Transverse colon (tissue), 4 donors: ENCODE measurements at regions of chrX and their contacts with region 1.

Region 1: DNA sequence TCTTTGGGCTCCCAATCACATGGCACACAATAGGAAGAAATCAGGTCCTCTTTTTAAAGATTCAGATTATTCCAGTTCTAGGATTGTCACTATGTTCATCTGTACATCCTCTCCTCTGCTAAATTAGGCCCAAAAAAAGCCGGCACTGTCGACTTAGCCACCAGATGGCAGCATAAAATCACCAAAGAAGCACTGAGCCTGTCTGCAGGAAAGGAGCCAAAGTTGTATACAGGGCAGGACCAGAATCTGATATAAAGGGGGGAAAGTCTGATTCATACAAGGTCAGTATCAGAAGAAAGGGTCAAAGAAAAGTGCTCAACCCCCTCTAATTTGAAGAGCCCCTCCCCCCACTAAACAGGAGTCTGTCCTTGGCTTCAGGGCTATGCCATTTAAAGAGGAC is 292.5 kb downstream of the CHIC1 start:
- DNase-seq: peak; percentile 74
- H3K4me3 ChIP-seq: no peak overlapping the region
- H3K27ac ChIP-seq: no peak overlapping the region
- H3K4me1 ChIP-seq: no peaks in the 10 kb centered on the region
- H3K27me3 ChIP-seq: no peaks in the 10 kb centered on the region
- CTCF ChIP-seq: peak; percentile 55 to 78 (median 56)
- EP300 ChIP-seq: no peak
- POLR2A ChIP-seq: no peak

Region 2: GRCh38 chrX:73903941-73904340 is 48.4 kb after region 1 on chrX:
- in situ Hi-C with region 1: no loop called
- intact Hi-C with region 1: no loop called
- DNase-seq: no peak
- H3K4me3 ChIP-seq: no peak overlapping the region
- H3K27ac ChIP-seq: no peak overlapping the region
- H3K4me1 ChIP-seq: no peaks in the 10 kb centered on the region
- H3K27me3 ChIP-seq: no peaks in the 10 kb centered on the region
- CTCF ChIP-seq: no peak
- EP300 ChIP-seq: no peak
- POLR2A ChIP-seq: no peak

Region 3: DNA sequence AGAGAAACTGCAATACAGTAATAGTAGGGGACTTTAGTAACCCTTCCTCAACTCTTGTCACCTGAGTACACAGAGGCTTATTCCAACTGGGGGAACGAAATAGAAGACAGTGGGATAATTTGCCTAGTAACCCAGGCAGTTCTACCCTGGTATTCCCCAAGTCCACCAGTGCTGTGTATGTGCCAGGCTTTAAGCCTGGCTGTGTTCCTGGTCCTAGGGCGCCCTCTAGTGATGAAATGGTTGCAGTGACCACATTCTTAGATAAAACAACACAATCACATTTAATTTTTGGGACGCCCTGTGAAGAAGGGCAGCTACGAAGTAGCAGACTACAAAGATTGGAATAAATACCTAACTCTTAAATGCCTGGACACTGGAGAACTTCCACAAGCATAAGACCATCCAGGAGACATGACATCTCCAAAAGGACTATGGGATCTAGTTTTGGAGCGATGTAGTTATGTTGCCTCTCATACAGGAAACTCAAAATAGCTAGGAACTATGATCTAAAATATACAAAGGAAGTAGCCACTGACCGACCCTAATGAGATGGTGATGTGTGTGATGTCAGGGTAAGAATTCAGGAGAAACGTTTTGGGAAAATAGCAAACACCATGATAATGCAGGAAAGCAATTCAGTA is 160.0 kb after region 1 on chrX:
- in situ Hi-C with region 1: loop called (anchors 5 to 10 kb)
- intact Hi-C with region 1: loop called (anchors 2 kb)
- DNase-seq: peak; percentile 63
- H3K4me3 ChIP-seq: no peak overlapping the region
- H3K27ac ChIP-seq: no peak overlapping the region
- H3K4me1 ChIP-seq: no peaks in the 10 kb centered on the region
- H3K27me3 ChIP-seq: no peaks in the 10 kb centered on the region
- CTCF ChIP-seq: peak; percentile 48 to 86 (median 61)
- EP300 ChIP-seq: no peak
- POLR2A ChIP-seq: no peak

Region 4: GRCh38 chrX:74133156-74133796 is 277.7 kb after region 1 on chrX:
- in situ Hi-C with region 1: loop called (anchors 10 to 25 kb)
- intact Hi-C with region 1: loop called (anchors 5 kb)
- DNase-seq: no peak
- H3K4me3 ChIP-seq: no peak overlapping the region
- H3K27ac ChIP-seq: no peak overlapping the region
- H3K4me1 ChIP-seq: no peaks in the 10 kb centered on the region
- H3K27me3 ChIP-seq: no peaks in the 10 kb centered on the region
- CTCF ChIP-seq: peak; percentile 50 to 76 (median 52)
- EP300 ChIP-seq: no peak
- POLR2A ChIP-seq: no peak

Region 5: GRCh38 chrX:74343343-74344279 is 488.1 kb after region 1 on chrX:
- in situ Hi-C with region 1: loop called (anchors 5 to 25 kb)
- intact Hi-C with region 1: loop called (anchors 10 kb)
- DNase-seq: peak; percentile 63
- H3K4me3 ChIP-seq: no peak overlapping the region
- H3K27ac ChIP-seq: peak overlapping the region in 1 of 4 donors; percentile 16
- H3K4me1 ChIP-seq: peaks cover 0 to 4% (median 2%) of the 10 kb centered on the region in 4 donors
- H3K27me3 ChIP-seq: no peaks in the 10 kb centered on the region
- CTCF ChIP-seq: peak; percentile 47 to 70 (median 51)
- EP300 ChIP-seq: no peak
- POLR2A ChIP-seq: no peak

Region 6: GRCh38 chrX:74536152-74536831 is 680.7 kb after region 1 on chrX:
- in situ Hi-C with region 1: loop called in 1 of 4 experiments (anchors 25 kb)
- intact Hi-C with region 1: no loop called
- DNase-seq: peak; percentile 78
- H3K4me3 ChIP-seq: peak overlapping the region; percentile 28 to 51 (median 38)
- H3K27ac ChIP-seq: peak overlapping the region; percentile 81 to 92 (median 88)
- H3K4me1 ChIP-seq: peaks cover 0 to 9% (median 0%) of the 10 kb centered on the region in 4 donors
- H3K27me3 ChIP-seq: no peaks in the 10 kb centered on the region
- CTCF ChIP-seq: peak; percentile 34 to 73 (median 45)
- EP300 ChIP-seq: no peak
- POLR2A ChIP-seq: peak; percentile 16

Region 7: DNA sequence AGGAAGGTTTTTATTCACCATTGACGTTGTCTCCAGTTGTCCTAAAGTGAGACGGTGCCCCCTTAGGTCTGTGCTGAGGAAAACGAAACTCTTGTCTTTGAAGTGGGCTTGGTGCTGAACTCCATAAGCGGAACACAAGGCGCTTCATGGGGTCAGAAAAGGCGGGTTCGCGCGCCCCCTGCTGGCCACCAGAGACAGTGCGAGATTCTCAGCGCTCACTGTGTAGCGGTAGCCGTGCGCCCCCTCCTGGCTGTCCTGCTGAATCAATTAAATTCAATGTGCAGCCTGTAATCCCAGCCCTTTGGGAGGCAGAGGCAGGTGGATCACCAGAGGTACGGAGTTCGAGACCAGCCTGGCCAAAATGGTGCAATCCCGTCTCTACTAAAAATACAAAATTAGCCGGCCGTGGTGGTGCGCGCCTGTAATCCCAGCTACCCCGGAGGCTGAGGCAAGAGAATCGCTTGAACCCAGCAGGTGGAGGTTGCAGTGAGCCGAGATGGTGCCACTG is 694.8 kb after region 1 on chrX:
- in situ Hi-C with region 1: loop called in 2 of 4 experiments (anchors 25 kb)
- intact Hi-C with region 1: no loop called
- DNase-seq: peak; percentile 88
- H3K4me3 ChIP-seq: no peak overlapping the region
- H3K27ac ChIP-seq: no peak overlapping the region
- H3K4me1 ChIP-seq: no peaks in the 10 kb centered on the region
- H3K27me3 ChIP-seq: no peaks in the 10 kb centered on the region
- CTCF ChIP-seq: peak; percentile 90 to 98 (median 97)
- EP300 ChIP-seq: no peak
- POLR2A ChIP-seq: no peak